MCF 10A (cell line): ENCODE measurements at regions of chr1 and their contacts with region 1.

Region 1: GRCh38 chr1:39196244-39197215 is 8.0 kb upstream of the MACF1 start:
- DNase-seq: no peak
- H3K4me3 Mint-ChIP-seq: no peak overlapping the region
- H3K27ac Mint-ChIP-seq: peak overlapping the region; percentile 59
- H3K4me1 Mint-ChIP-seq: peaks cover 32% of the 10 kb centered on the region
- H3K27me3 Mint-ChIP-seq: no peaks in the 10 kb centered on the region
- CTCF ChIP-seq: no peak

Region 2: GRCh38 chr1:38758820-38759219 is 437.7 kb before region 1 on chr1:
- CTCF ChIA-PET with region 1: no interaction called
- POLR2A ChIA-PET with region 1: no interaction called
- intact Hi-C with region 1: no loop called
- DNase-seq: no peak
- H3K4me3 Mint-ChIP-seq: no peak overlapping the region
- H3K27ac Mint-ChIP-seq: no peak overlapping the region
- H3K4me1 Mint-ChIP-seq: no peaks in the 10 kb centered on the region
- H3K27me3 Mint-ChIP-seq: peaks cover 42% of the 10 kb centered on the region
- CTCF ChIP-seq: no peak

Region 3: DNA sequence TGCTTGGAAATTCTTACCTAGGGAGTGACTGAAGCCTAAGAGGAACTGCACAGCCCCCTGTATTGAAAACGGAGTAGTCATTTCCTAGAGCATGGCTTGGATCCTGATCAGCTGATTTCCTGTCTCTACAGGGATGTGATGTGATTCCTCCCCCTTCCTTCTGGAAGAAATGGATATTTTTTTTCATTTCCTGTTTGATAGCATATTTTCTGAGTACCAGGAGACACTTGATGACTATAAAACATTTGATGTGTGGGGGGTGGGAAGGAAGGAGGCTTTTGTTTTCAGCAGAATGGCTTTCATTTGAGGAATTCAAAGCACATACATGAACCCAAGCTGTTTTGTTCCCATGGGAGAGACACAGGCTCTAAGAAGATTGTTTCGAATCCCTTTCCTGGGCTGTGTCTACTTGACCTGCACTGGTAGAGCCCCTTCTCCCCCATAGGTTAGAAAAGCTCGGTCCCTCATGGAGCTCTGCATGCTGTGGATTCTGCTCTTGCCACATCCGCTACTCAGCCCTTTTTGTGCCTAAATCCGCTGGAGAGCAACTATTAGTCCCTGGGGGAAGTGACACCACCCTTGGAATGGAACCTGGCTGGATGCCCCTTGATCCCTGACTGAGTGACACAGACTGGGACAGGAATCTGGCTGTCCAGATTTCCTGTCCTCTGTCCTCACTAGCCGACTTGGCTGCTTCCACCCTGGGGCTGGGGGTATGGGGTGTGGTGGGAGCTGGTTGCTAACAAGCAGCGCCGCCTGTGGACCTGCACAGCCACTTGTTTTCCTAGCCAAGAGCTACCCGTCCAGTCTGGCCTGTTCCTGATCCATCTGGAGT is 63.8 kb before region 1 on chr1:
- CTCF ChIA-PET with region 1: interaction called, 57 read pairs
- POLR2A ChIA-PET with region 1: interaction called, 121 read pairs
- intact Hi-C with region 1: loop called (anchors 1 kb)
- DNase-seq: peak; percentile 77
- H3K4me3 Mint-ChIP-seq: peak overlapping the region; percentile 10
- H3K27ac Mint-ChIP-seq: peak overlapping the region; percentile 85
- H3K4me1 Mint-ChIP-seq: peaks cover 52% of the 10 kb centered on the region
- H3K27me3 Mint-ChIP-seq: no peaks in the 10 kb centered on the region
- CTCF ChIP-seq: peak; percentile 14

Region 4: DNA sequence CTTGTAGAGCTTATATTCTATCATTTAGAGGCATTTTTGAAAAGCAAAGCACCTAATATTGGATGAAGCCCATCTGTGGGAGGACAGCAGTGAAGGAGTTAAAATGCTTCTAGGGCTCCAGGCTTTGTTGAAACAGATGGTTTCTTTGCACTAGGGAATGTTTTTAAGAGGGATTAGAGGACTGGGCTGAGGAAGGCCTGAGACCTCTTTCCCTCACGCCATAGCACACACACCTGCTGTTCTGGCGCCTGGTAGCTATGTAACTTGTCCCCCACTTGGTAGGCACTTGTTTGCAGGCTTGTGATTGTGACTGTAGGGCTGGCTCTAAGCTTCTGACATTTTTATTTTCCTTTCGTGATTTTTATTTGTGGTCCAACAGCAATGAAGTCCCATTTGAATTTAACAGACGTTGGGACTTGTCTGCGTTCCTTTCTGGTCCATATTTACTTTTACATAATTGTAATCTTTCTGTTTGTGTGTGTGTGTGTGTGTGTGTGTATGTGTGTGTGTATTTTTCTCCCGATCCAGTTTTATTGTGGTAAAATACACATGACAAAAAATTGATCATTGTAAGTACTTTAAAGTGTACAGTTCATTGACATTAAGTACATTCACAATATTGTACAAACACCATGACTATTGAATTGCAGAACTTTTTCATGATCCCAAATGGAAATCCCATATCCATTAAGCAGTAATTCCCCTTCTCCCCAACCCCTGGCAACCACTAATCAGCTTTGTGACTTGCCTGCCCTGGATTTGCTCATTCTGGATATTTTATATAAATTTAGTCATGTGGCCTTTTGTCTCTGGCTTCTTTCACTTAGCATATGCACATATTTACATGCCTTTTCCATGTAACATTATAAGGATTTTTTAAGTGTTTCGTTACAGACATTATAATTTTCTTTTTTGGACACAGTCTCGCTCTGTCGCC is 25.5 kb before region 1 on chr1:
- CTCF ChIA-PET with region 1: interaction called, 25 read pairs
- POLR2A ChIA-PET with region 1: interaction called, 6 read pairs
- intact Hi-C with region 1: no loop called
- DNase-seq: no peak
- H3K4me3 Mint-ChIP-seq: no peak overlapping the region
- H3K27ac Mint-ChIP-seq: peak overlapping the region; percentile 50
- H3K4me1 Mint-ChIP-seq: peaks cover 32% of the 10 kb centered on the region
- H3K27me3 Mint-ChIP-seq: no peaks in the 10 kb centered on the region
- CTCF ChIP-seq: no peak

Region 5: GRCh38 chr1:39238476-39238875 is 41.9 kb after region 1 on chr1:
- CTCF ChIA-PET with region 1: interaction called, 11 read pairs
- POLR2A ChIA-PET with region 1: interaction called, 4 read pairs
- intact Hi-C with region 1: no loop called
- DNase-seq: peak; percentile 22
- H3K4me3 Mint-ChIP-seq: no peak overlapping the region
- H3K27ac Mint-ChIP-seq: no peak overlapping the region
- H3K4me1 Mint-ChIP-seq: peaks cover 9% of the 10 kb centered on the region
- H3K27me3 Mint-ChIP-seq: no peaks in the 10 kb centered on the region
- CTCF ChIP-seq: no peak

Region 6: GRCh38 chr1:39268112-39268581 is 71.6 kb after region 1 on chr1:
- CTCF ChIA-PET with region 1: interaction called, 141 read pairs
- POLR2A ChIA-PET with region 1: interaction called, 20 read pairs
- intact Hi-C with region 1: no loop called
- DNase-seq: peak; percentile 65
- H3K4me3 Mint-ChIP-seq: peak overlapping the region; percentile 68
- H3K27ac Mint-ChIP-seq: peak overlapping the region; percentile 90
- H3K4me1 Mint-ChIP-seq: peaks cover 46% of the 10 kb centered on the region
- H3K27me3 Mint-ChIP-seq: no peaks in the 10 kb centered on the region
- CTCF ChIP-seq: no peak

Region 7: GRCh38 chr1:39378377-39378776 is 181.8 kb after region 1 on chr1:
- CTCF ChIA-PET with region 1: no interaction called
- POLR2A ChIA-PET with region 1: no interaction called
- intact Hi-C with region 1: no loop called
- DNase-seq: peak; percentile 80
- H3K4me3 Mint-ChIP-seq: no peak overlapping the region
- H3K27ac Mint-ChIP-seq: no peak overlapping the region
- H3K4me1 Mint-ChIP-seq: peaks cover 7% of the 10 kb centered on the region
- H3K27me3 Mint-ChIP-seq: no peaks in the 10 kb centered on the region
- CTCF ChIP-seq: peak; percentile 41

Region 8: DNA sequence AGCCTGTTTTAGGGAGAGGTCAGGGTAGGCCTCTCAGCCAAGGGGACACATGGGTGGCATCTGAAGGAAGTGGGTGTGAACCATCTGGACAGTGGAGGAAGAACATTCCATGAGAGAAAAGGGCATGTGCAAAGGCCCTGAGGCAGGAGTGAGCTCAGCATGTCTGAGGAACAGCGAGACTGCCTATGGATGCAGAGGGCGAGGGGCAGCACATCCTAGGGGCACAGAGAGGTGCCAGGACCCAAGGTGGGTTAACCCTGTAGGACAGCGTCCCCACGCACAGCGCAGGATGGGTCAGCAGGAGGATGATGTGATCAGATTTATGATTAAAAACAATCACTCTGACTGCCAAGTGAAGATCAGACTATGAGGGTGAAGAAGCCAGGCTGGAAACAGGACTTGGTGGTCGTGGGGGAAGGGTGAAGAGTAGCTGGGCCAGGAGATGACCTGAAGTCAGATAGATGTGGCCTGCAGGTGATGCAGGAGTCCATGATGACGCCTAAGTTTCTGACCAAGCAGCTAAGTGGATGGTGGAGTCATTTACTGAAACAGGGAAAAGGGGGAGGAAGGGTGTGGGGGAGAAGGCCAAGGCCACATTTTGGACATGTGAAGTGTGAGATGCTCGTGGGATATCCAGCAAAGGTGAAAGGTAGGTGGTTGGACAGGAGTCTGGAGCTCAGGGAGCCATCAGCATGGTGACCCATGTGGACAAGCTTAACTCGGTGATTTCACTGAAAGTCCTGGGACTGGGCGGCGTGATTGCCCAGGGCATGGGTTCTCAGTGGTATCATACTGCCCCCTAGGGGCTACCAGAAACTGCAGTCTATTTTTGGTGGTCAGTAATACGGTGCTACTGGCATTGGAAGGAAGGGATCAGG is 342.3 kb after region 1 on chr1:
- CTCF ChIA-PET with region 1: interaction called, 6 read pairs
- POLR2A ChIA-PET with region 1: interaction called, 3 read pairs
- intact Hi-C with region 1: loop called (anchors 1 kb)
- DNase-seq: peak; percentile 74
- H3K4me3 Mint-ChIP-seq: no peak overlapping the region
- H3K27ac Mint-ChIP-seq: no peak overlapping the region
- H3K4me1 Mint-ChIP-seq: peaks cover 15% of the 10 kb centered on the region
- H3K27me3 Mint-ChIP-seq: no peaks in the 10 kb centered on the region
- CTCF ChIP-seq: peak; percentile 80